ENCODE measurements at regions of chr5 and their contacts with region 1.

Region 1: DNA sequence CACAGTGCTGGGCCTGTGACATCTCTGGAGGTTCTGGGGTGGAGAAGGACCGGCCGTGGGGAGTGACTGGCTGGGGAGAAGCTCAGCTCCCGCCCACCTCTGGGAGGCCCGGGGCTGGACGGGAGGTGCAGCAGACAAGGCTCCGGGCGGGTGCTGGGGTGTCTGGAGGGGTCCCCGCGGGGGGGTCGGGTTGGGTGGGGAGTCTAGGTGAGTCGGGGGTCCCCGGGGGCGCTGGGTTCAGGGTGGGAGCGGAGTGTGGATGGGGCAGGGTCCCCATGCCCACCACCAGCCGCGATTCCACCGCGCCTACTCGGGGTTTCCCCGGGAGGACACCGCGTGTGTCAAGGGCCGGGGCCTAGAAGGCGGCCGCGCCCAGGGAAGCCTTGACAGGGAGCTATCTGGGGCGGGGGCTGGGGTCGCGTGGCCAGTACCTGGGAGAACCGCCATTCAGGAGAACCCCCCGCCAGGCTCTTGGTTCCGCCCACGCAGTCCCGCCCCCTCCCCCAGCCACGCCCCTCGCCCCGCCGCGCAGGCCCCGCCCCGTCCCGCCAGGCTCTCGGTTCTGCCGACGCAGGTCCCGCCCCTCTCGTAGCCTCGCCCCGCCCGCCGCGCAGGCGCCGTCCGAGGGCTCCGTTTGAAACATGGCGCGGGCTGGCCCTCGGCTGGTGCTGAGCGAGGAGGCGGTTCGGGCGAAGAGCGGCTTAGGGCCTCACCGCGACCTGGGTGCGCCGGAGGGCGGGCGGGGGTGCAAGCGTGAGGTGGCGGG is at the start of gene CEP72:
- DNase-seq: peak; percentile 97
- ATAC-seq: peak; percentile 97
- H3K4me3 Mint-ChIP-seq: peak within 1 kb of the TSS; percentile 79
- H3K27ac Mint-ChIP-seq: peak within 1 kb of the TSS; percentile 79
- H3K4me1 Mint-ChIP-seq: peaks cover 53% of the 10 kb centered on the region
- H3K27me3 Mint-ChIP-seq: peaks cover 5% of the 10 kb centered on the region
- total RNA-seq, gene CEP72: 23.7 to 26.4 TPM

Region 2: GRCh38 chr5:270340-270739 is 341.6 kb before region 1 on chr5:
- CTCF ChIA-PET with region 1: no interaction called
- POLR2A ChIA-PET with region 1: no interaction called
- intact Hi-C with region 1: loop called in 1 of 2 experiments (anchors 1 kb)
- DNase-seq: no peak
- ATAC-seq: no peak
- H3K4me3 Mint-ChIP-seq: peak overlapping the region; percentile 95
- H3K27ac Mint-ChIP-seq: peak overlapping the region; percentile 47
- H3K4me1 Mint-ChIP-seq: peaks cover 41% of the 10 kb centered on the region
- H3K27me3 Mint-ChIP-seq: no peaks in the 10 kb centered on the region

Region 3: DNA sequence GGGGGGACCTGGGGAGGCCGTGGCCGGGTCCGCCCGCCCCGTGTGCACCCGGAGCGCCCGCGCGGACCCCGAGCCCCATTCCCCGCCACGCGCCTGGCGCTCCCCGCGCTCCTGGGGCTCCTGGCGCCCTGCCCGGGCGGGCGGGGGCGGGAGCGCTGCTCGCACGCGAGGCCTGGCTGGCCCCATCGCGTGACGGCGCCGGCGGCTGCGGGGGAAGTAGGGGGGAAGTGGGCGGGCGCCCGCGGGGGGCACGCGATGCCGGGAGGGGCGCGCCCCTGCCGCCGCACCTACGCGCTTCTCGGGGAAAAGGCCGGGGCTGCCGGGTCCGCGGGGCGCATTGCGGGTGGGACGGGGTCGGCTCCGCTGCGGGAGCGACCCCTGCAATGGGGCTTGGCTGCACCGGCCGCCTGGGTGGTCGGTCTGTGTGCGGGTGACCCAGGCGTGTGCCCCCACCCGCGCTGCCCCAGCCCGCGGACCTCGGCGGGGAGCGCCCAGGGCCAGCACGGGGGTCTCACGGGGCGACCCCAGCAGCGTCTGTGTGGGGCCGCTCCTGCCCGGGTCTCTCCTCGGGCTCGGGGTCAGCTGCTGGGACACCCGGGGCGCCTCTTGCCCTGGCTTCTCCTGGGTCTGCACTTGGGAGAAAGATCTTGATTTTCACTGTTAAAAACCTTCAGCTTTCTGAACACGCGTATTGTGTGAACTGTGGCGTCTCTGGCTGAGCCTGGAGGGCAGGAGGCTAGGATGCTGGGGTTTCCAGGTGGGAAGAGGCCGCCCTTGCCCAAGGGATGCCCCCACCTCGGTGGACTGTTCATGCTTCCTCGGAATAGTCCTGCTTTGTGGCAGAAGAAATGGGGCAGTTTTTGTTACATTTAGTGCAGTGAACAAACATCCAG is 237.9 kb before region 1 on chr5:
- CTCF ChIA-PET with region 1: no interaction called
- POLR2A ChIA-PET with region 1: no interaction called
- intact Hi-C with region 1: loop called in 1 of 2 experiments (anchors 5 kb)
- DNase-seq: peak; percentile 88
- ATAC-seq: peak; percentile 37
- H3K4me3 Mint-ChIP-seq: peak overlapping the region; percentile 62
- H3K27ac Mint-ChIP-seq: peak overlapping the region; percentile 94
- H3K4me1 Mint-ChIP-seq: peaks cover 69% of the 10 kb centered on the region
- H3K27me3 Mint-ChIP-seq: no peaks in the 10 kb centered on the region

Region 4: DNA sequence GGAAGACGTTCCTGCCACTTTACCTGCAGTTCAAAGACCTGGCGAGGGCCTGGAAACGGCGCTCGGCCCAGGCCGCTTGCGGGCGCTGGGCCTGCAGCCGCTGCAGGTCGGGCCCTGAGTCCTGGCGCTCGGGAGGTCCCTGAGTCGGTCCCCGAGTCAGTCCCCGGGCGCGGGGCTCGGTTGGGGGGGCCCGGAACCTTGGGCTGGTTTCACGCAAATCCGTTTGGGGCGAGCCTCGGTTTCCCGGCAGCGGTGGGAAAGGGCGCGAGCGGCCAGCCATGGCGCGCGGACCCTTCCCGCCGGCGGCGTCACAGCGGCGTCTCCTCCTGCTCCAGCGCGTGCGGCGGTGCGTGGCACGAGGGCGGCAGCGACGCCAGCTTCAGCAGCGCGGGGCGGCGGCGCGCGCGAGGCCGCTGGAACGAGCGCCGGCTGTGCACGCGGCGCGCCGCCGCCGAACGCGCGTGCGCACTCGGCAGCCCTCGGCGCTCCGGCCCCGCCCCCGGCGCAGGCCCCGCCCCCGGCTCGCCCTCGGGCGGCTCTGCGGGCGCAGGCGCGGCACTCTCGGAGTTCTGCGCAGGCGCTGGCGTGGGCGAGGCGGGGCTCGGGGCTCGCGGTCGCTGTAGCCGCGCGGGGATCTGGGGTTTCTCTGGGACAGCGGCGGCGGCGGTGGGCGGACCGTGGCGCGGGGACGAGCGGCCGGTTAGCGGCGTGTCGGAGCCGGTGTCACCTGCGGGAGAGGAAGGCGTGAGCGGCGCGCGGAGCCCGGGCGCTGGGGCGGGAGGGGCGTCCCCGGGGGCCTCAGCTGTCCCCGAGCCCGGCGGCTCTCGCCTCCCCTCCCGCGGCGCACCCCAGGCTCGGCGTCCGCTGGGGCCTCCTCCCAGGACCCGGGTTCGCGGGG is 139.0 kb before region 1 on chr5:
- CTCF ChIA-PET with region 1: no interaction called
- POLR2A ChIA-PET with region 1: interaction called, 3 read pairs
- intact Hi-C with region 1: loop called (anchors 1 to 5 kb)
- DNase-seq: peak; percentile 93
- ATAC-seq: peak; percentile 80
- H3K4me3 Mint-ChIP-seq: peak overlapping the region; percentile 88
- H3K27ac Mint-ChIP-seq: peak overlapping the region; percentile 93
- H3K4me1 Mint-ChIP-seq: peaks cover 25% of the 10 kb centered on the region
- H3K27me3 Mint-ChIP-seq: peaks cover 4% of the 10 kb centered on the region

Region 5: DNA sequence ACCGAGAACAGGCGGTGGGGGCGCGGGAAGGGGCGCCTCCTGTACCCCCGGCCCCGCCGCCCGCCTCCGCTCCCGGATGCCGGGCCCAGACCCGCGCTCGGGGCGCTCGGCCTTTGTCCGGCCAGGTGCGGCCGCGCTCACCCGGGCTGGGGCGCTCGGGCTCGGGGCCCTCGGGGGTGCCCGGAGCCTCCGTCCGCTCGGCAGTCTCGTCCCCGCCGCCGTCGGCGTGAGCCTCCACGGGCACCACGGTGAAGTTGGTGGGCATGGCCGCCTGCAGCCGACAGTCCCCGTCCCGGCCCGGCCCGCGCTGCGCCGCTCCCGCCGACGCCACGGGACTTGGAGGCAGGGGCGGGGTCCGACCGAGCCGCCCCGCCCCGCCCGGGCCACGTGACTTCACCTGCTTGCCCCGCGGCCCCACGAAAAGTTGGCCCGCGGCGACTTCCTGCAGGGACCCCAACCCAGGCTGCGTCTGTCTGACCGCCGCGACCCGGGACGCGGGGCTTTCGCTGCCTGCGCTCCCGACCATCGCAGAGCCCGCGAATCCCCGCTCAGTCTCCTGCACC is 499.9 kb after region 1 on chr5 and contains the start of gene SLC12A7:
- CTCF ChIA-PET with region 1: no interaction called
- POLR2A ChIA-PET with region 1: interaction called, 3 read pairs
- intact Hi-C with region 1: loop called in 1 of 2 experiments (anchors 2 kb)
- DNase-seq: peak; percentile 84
- ATAC-seq: peak; percentile 76
- H3K4me3 Mint-ChIP-seq: peak within 1 kb of the TSS; percentile 82
- H3K27ac Mint-ChIP-seq: peak within 1 kb of the TSS; percentile 75
- H3K4me1 Mint-ChIP-seq: peaks cover 33% of the 10 kb centered on the region
- H3K27me3 Mint-ChIP-seq: no peaks in the 10 kb centered on the region
- total RNA-seq, gene SLC12A7: 18.5 to 21.6 TPM